ENCODE measurements at regions of chr6 and their contacts with region 1.

Region 1: DNA sequence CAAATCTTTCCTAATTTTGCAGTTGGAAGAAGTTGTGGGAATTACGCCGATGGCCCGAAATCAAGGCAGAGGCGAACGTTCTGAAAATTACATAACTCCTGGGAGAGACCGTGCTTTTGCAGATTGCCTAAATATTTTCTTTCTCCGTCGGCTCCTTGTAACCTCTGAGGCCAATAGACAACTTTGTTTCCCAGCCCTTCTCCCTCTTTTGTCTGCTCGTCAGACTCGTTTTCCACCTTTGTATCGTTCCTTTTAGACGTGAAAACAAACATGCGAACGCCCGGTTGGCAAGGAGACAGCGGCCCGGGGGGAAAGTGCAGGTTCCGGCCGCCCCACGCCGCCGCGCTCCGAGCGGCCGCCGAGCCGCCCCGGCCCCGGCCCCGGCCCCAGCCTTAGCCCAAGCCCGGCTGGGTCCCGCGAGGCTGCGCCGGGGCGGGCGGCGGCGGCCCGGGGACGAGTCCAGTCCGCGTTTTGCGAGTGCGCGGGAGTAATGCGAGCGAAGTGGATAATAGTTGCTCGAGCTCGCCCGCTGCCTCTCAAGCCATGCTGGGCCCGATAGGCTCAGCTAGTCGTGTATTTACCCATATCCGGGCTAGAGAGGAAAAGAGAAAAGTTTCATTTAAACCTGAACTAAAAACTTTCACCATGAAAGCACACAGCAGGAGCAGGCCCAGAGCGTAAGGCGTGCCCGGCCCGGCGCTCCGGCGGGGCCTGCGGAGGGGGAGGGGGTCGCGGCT is at the start of gene ARID1B:
- DNase-seq: peak; percentile 61 to 64
- H3K4me3 ChIP-seq: peak within 1 kb of the TSS; percentile 95
- H3K27ac ChIP-seq: peak within 1 kb of the TSS; percentile 90
- H3K4me1 ChIP-seq: peaks cover 38% of the 10 kb centered on the region
- H3K27me3 ChIP-seq: no peaks in the 10 kb centered on the region
- CTCF ChIP-seq: no peak
- total RNA-seq, gene ARID1B: 38.8 and 42.8 TPM in 2 replicates

Region 2: GRCh38 chr6:155188707-155189496 is 1588.1 kb before region 1 on chr6:
- CTCF ChIA-PET with region 1: no interaction called
- POLR2A ChIA-PET with region 1: interaction called, 51 read pairs
- intact Hi-C with region 1: no loop called
- DNase-seq: peak in 1 of 2 experiments; percentile 43
- H3K4me3 ChIP-seq: no peak overlapping the region
- H3K27ac ChIP-seq: no peak overlapping the region
- H3K4me1 ChIP-seq: peaks cover 30% of the 10 kb centered on the region
- H3K27me3 ChIP-seq: no peaks in the 10 kb centered on the region
- CTCF ChIP-seq: no peak

Region 3: GRCh38 chr6:156686995-156687788 is 89.8 kb before region 1 on chr6:
- CTCF ChIA-PET with region 1: no interaction called
- POLR2A ChIA-PET with region 1: no interaction called
- intact Hi-C with region 1: loop called (anchors 1 kb)
- DNase-seq: peak; percentile 43 to 82
- H3K4me3 ChIP-seq: peak overlapping the region; percentile 82
- H3K27ac ChIP-seq: peak overlapping the region; percentile 86
- H3K4me1 ChIP-seq: peaks cover 16% of the 10 kb centered on the region
- H3K27me3 ChIP-seq: no peaks in the 10 kb centered on the region
- CTCF ChIP-seq: no peak

Region 4: DNA sequence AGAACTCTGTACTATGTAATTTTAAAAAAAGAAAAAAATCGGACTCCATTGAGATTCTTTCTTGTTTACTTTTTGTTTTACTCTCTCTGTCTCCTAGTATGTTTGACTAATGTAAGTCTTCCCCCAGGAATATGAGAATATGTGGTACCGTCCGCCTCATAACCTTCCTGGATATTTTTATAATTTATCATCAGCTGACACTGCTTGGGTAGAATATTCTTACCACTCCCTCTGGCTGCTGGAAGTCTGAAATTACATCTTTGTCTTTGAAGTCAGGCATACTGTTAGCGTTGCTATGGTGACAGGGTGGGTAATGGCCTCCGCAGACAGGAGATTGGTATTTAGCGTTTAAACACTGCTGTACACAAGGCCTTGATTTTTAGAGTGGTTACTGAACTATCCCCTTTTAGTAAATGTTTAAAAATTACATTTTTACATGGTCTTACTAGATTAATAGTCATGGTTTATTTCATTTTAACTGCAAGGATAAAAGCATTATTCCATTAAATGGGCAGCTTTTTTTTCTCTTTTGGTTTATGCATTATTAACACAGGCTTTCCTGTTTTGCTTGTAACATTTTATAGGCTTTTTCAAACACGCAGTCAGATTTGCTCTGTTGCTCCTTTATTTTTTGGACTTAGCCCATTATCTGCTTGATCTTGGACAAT is 176.6 kb after region 1 on chr6:
- CTCF ChIA-PET with region 1: interaction called, 5 read pairs
- POLR2A ChIA-PET with region 1: no interaction called
- intact Hi-C with region 1: loop called (anchors 2 kb)
- DNase-seq: peak; percentile 56 to 93
- H3K4me3 ChIP-seq: no peak overlapping the region; the same call in 1 of the 2 replicates
- H3K27ac ChIP-seq: peak overlapping the region; percentile 35
- H3K4me1 ChIP-seq: peaks cover 40% of the 10 kb centered on the region
- H3K27me3 ChIP-seq: no peaks in the 10 kb centered on the region
- CTCF ChIP-seq: 0 out of 2 replicates have a peak, but pooled peaks have one; percentile 16

Region 5: GRCh38 chr6:157148391-157149323 is 371.6 kb after region 1 on chr6:
- CTCF ChIA-PET with region 1: no interaction called
- POLR2A ChIA-PET with region 1: no interaction called
- intact Hi-C with region 1: loop called (anchors 2 kb)
- DNase-seq: peak; percentile 51 to 76
- H3K4me3 ChIP-seq: no peak overlapping the region
- H3K27ac ChIP-seq: no peak overlapping the region
- H3K4me1 ChIP-seq: no peaks in the 10 kb centered on the region
- H3K27me3 ChIP-seq: no peaks in the 10 kb centered on the region
- CTCF ChIP-seq: no peak

Region 6: DNA sequence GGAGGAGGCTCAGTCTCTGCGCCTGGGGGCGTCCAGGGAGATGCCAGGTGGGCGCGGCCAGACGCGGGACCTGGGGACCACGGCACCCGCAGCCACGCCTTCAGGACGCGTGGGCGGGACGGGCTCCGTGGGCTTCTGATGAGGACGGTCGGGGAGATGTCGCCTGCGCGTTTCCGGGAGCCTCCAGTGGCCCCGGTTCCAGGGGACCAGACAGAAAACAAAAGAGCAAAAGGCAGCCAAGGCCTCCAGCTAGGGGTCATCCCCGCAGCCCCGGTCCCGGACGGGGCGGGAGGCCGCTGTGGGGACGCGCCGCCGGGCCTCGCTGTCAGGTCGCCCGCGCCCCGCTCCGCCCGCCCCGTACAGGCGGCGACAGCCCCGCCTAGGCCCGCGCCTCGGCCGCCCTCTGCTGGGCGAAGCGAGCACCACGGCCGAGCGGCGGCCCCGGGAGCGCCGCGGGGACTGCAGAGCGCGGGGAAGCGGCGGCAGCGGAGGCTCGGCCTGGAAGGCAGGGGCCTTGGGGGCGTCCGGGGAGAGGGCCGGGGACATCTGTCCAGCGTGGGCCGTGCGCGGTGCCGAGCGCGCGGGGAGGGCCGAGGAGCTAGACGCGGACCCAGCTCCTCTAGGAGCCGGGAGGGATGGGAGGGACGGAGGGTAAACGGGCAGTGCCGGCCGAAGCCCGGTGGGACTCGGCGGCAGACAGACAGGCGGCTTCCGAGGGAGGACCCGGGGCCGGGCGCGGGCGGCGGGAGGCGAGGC is 497.6 kb after region 1 on chr6:
- CTCF ChIA-PET with region 1: no interaction called
- POLR2A ChIA-PET with region 1: no interaction called
- intact Hi-C with region 1: loop called (anchors 10 kb)
- DNase-seq: peak in 1 of 2 experiments; percentile 75
- H3K4me3 ChIP-seq: peak overlapping the region; percentile 72
- H3K27ac ChIP-seq: no peak overlapping the region
- H3K4me1 ChIP-seq: no peaks in the 10 kb centered on the region
- H3K27me3 ChIP-seq: no peaks in the 10 kb centered on the region
- CTCF ChIP-seq: peak; percentile 39; the same call in 1 of the 2 replicates